Activated CD4-positive, alpha-beta memory T cell treated with anti-CD3 and anti-CD28 coated beads for 36 hours (primary cell): ENCODE measurements at regions of chr6 and their contacts with region 1.

Region 1: DNA sequence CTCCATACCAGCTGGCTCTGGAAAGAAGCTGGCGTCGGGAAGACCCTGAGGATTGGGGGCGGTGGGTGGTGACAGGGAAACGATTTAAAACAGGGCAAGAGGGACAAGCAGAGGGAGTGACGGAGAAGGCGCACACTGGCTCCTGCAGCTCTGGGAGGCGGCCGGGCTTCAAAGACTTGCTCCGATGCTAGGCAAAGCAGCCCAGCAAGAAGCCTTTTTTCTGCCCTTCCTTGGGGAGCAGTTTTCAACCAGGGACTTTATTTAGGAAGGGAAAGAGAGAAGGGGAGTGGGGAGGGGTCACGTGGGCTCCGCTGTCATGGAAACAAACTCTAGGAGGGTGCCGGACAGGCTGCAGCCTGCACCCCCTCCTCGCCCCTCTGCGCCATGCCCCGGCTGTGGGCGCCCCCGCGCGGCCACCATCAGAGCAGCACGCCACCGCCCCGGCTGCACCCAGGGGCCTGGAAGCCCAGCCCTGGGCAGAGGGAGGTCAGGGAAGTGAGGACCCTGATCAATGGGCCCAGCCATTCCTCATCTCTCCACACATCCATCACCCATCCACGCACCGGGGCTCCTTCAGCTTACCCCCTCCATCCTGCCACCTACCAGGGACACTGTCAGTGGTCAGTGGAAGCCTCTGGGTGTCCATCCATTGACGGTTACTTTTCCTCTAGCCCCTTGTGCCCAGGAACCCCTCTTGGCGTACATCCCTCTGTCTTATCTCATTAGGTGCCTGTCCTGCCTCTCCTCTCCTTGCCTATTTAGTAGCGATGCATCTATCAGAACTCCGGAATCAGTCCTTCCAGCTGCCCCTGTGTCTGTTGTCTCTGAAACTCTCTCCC is 66.6 kb upstream of the CCDC167 start:
- DNase-seq: peak; percentile 82
- H3K4me3 Mint-ChIP-seq: peak overlapping the region; percentile 27
- H3K27ac Mint-ChIP-seq: no peak overlapping the region
- H3K4me1 Mint-ChIP-seq: peaks cover 5% of the 10 kb centered on the region
- H3K27me3 Mint-ChIP-seq: no peaks in the 10 kb centered on the region

Region 2: GRCh38 chr6:37483917-37484785 is 82.2 kb before region 1 on chr6:
- CTCF ChIA-PET with region 1: interaction called, 43 read pairs
- POLR2A ChIA-PET with region 1: interaction called, 3 read pairs
- intact Hi-C with region 1: loop called (anchors 1 kb)
- DNase-seq: peak; percentile 80
- H3K4me3 Mint-ChIP-seq: no peak overlapping the region
- H3K27ac Mint-ChIP-seq: no peak overlapping the region
- H3K4me1 Mint-ChIP-seq: peaks cover 17% of the 10 kb centered on the region
- H3K27me3 Mint-ChIP-seq: no peaks in the 10 kb centered on the region

Region 3: DNA sequence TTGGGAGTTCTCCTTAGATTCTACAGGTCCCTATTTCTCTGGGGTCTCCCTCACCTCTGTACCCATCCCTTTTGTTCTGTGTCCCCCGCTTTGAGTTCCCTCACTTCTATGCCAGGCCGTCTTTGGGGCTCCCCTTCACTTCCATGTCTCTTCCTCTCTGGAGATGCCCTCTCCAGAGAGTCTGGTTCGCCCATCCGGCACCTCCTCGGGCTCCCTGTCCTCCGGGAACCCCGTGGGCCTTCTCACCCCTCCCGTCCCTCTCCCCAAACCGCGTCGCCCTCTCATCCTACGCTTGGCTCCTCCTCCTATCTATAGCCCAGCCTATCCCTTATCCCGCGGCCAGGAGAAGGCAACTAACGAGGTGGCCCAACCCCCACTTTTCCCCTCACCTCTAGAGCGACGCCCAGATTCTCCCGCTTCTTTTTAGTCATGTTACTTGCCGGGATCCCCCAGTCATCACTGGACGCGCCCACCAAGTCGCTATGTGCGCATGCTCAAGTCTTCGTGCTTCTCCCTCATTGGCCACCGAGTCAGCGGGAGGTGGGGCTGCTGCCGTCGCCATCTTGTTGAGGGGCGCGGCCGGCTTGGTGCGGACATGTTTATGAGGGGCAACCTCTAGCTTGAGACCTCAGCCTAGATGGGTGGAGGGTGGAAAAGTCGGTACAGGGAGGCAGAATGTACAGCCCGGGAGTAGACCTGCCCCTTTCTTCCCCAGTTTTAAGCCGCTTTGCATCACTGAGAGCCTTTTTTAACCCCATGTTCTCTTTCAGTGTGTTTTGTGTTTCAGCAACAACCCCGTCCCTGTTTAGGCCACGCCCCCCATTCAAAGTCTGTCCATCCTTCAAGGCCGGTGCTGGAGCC is 66.7 kb before region 1 on chr6 and contains the start of gene CCDC167:
- CTCF ChIA-PET with region 1: interaction called, 11 read pairs
- POLR2A ChIA-PET with region 1: no interaction called
- intact Hi-C with region 1: no loop called
- DNase-seq: peak; percentile 99
- H3K4me3 Mint-ChIP-seq: peak within 1 kb of the TSS; percentile 92
- H3K27ac Mint-ChIP-seq: peak within 1 kb of the TSS; percentile 95
- H3K4me1 Mint-ChIP-seq: peaks cover 86% of the 10 kb centered on the region
- H3K27me3 Mint-ChIP-seq: no peaks in the 10 kb centered on the region
- total RNA-seq, gene CCDC167: 60.4 to 65.2 TPM

Region 4: GRCh38 chr6:37528541-37528940 is 37.8 kb before region 1 on chr6:
- CTCF ChIA-PET with region 1: interaction called, 13 read pairs
- POLR2A ChIA-PET with region 1: no interaction called
- intact Hi-C with region 1: no loop called
- DNase-seq: no peak
- H3K4me3 Mint-ChIP-seq: no peak overlapping the region
- H3K27ac Mint-ChIP-seq: no peak overlapping the region
- H3K4me1 Mint-ChIP-seq: peaks cover 26% of the 10 kb centered on the region
- H3K27me3 Mint-ChIP-seq: no peaks in the 10 kb centered on the region

Region 5: GRCh38 chr6:37554480-37554819 is 11.9 kb before region 1 on chr6:
- CTCF ChIA-PET with region 1: interaction called, 30 read pairs
- POLR2A ChIA-PET with region 1: no interaction called
- intact Hi-C with region 1: no loop called
- DNase-seq: no peak
- H3K4me3 Mint-ChIP-seq: no peak overlapping the region
- H3K27ac Mint-ChIP-seq: no peak overlapping the region
- H3K4me1 Mint-ChIP-seq: peaks cover 37% of the 10 kb centered on the region
- H3K27me3 Mint-ChIP-seq: no peaks in the 10 kb centered on the region

Region 6: DNA sequence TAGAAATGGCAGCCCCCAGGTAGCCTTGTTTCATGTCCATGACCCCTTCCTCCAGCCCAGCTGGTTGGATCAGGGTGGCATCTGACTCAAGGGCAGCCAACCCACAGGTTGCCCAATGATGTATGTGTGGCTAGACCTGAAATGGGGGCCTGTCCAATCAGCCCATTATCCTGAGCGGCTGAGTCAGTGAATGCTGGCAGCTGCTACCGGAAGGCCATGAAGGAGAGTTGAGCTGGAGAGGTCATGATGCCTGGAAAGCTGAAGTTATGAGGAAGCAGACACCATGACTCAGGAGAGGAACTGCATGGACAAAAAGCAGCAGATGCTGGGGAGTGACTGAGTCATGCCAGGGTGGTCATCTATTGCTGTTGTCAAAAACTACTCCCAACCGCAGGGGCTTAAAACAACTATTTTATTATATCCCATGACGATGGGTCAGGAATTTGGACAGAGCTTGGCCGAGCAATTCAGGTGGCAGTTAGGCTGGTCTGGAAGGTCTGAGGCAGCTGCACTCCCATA is 64.0 kb after region 1 on chr6:
- CTCF ChIA-PET with region 1: no interaction called
- POLR2A ChIA-PET with region 1: no interaction called
- intact Hi-C with region 1: no loop called
- DNase-seq: no peak
- H3K4me3 Mint-ChIP-seq: no peak overlapping the region
- H3K27ac Mint-ChIP-seq: no peak overlapping the region
- H3K4me1 Mint-ChIP-seq: peaks cover 4% of the 10 kb centered on the region
- H3K27me3 Mint-ChIP-seq: peaks cover 5% of the 10 kb centered on the region

Region 7: DNA sequence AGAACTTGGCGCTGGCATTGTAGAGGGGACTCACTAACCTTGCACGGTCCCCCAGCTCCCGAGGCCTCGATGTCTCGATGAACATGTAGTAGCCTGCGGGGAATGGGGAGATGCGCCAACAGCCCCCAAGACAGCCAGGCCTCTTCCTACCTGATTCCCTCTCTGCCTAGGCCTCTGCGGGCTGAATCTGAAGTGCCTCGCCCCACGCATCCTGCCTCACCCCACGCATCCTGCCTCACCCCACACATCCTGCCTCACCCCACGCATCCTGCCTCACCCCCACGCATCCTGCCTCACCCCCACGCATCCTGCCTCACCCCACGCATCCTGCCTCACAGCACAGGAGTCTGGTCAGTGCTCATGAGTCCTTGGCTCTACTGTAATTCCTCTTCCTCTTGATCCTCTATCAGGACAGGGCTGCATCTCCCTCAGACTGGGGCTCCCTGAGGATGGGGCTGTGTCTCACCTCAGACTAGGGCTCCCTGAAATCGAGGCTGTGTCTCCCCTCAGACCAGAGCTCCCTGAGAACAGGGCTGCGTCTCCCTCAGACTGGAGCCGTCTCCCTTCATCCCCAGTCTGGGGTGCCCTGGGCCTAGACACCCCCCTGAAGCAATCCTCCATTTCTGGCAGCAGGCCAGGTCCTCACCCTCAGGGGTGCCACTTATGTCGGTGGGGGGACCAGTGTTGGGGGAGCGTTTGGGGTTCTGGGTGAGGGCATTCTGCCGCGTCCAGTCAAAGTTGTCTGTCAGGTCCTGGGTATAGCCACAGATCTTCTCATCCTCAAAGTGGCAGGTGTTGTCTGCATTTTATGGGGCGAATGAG is 77.7 kb after region 1 on chr6:
- CTCF ChIA-PET with region 1: no interaction called
- POLR2A ChIA-PET with region 1: no interaction called
- intact Hi-C with region 1: no loop called
- DNase-seq: peak; percentile 35
- H3K4me3 Mint-ChIP-seq: no peak overlapping the region
- H3K27ac Mint-ChIP-seq: peak overlapping the region; percentile 54
- H3K4me1 Mint-ChIP-seq: peaks cover 27% of the 10 kb centered on the region
- H3K27me3 Mint-ChIP-seq: no peaks in the 10 kb centered on the region

Region 8: DNA sequence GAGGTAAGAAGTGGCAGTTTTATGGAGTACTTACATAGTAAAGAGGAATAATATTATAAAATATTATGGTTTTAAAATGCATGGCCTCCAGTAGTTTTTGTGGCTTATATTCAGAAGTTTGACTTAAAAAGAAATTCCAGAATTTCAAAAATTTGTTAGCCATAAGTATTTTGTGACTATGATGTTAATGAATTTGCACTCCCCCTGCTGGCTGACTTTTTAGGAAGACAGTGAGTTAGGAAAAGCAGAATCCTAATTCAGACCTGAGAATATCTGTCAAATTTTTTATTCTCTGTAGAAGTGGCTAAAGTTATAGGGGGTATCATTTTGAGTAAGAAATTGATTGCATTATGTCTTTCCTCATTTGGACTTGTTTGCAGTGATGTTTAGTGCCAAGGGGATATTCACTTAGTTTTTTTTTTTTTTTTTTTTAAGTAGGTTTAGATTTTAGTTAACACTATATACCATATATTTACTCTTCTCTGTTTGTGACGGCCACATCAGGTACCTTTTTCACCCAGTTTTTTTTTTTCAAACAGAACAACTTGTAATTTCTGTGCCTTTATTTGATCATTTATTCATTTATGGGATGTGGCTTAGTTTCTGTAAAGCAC is 294.0 kb after region 1 on chr6:
- CTCF ChIA-PET with region 1: no interaction called
- POLR2A ChIA-PET with region 1: no interaction called
- intact Hi-C with region 1: no loop called
- DNase-seq: no peak
- H3K4me3 Mint-ChIP-seq: no peak overlapping the region
- H3K27ac Mint-ChIP-seq: no peak overlapping the region
- H3K4me1 Mint-ChIP-seq: peaks cover 73% of the 10 kb centered on the region
- H3K27me3 Mint-ChIP-seq: no peaks in the 10 kb centered on the region